Upper lobe of right lung (tissue), 1 donor: ENCODE measurements at regions of chr17 and their contacts with region 1.

Region 1: DNA sequence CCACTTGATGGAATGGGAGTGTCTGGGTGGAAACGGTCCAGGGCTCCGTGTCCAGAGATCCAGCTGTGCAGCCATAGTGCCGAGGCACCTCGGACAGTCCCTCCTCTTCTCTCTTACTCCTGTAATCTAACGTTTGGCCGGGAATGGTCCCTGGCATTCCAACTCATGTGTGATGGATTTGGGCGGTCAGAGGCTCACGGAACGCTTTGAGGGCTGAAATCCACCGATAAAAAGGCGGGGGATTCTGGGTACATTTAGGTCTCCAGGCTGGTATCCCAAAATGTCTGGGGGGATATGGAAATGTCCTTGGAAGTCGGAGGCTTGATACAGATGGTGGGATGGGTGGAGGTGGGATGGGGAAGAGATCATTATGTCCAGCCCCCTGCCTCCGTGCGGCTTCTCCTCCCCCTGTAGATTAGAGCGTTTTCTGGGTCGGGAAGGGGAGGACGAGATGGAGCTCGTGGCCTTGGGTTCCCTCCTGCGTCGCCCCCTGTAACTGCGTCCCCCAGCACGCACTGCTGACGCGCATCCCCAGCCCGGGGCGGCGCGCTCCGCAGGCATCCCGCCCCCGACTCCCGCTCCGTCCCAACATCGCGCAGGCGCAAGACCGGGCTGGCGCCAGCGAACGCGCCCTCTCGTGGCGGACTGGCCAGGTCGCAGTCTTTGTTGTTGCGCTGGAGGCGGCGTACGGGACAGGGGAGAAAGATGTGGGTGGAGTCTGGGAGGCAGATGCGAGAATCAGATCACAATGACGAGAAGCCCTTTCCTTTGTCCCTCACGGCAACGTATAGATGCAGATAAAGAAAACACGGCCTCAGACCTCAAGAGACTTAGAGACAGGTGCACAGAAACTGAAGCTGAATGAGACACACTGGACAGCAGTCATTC is 4.5 kb upstream of the SGCA start:
- DNase-seq: peak; percentile 95
- ATAC-seq: peak; percentile 98
- H3K4me3 ChIP-seq: peak overlapping the region; percentile 50
- H3K27ac ChIP-seq: no peak overlapping the region
- H3K4me1 ChIP-seq: peaks cover 11% of the 10 kb centered on the region
- H3K27me3 ChIP-seq: no peaks in the 10 kb centered on the region
- CTCF ChIP-seq: peak; percentile 94

Region 2: DNA sequence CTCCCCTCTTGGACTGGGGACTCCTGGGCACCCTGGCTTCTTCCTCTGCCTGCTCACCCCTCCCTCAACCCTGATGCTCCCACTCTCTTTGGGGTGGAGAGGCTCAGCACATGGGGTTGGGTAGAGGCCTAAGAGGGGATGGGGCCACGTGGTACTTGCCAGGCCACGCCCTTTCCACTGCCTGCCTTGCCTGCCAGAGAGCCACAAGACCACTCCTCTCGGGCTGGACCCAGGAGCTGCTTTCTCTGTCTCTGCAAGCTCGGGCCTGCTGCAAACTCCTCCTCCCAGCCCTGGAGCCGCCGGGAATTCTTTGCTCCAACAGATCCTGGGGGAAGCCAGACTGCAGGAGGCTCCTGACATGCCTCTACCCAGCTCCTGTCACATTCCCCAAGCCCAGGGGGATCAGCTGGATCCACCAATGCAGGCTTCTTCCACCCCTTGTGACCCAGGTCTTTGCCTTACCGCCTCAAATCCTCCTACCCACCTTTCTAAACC is 180.5 kb before region 1 on chr17:
- intact Hi-C with region 1: no loop called
- DNase-seq: no peak
- ATAC-seq: no peak
- H3K4me3 ChIP-seq: no peak overlapping the region
- H3K27ac ChIP-seq: no peak overlapping the region
- H3K4me1 ChIP-seq: no peaks in the 10 kb centered on the region
- H3K27me3 ChIP-seq: peaks cover 12% of the 10 kb centered on the region
- CTCF ChIP-seq: no peak

Region 3: DNA sequence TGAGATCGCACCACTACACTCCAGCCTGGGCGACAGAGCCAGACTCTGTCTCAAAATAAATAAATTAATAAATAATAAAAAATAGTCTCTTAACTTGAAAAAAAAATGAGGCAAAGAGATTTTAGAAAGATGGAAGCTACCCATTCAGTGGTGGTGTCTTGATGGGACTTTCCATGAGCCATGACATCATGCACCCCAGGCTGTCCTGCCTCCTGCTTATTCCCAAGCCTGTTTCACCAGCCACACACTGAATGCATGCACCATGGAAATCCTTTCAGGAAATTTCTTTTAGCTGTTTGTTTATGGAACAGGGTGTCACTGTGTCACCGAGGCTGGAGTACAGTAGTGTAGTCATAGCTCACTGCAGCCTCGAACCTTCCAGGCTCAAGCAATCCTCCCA is 157.4 kb before region 1 on chr17:
- intact Hi-C with region 1: no loop called
- DNase-seq: no peak
- ATAC-seq: no peak
- H3K4me3 ChIP-seq: no peak overlapping the region
- H3K27ac ChIP-seq: no peak overlapping the region
- H3K4me1 ChIP-seq: no peaks in the 10 kb centered on the region
- H3K27me3 ChIP-seq: peaks cover 39% of the 10 kb centered on the region
- CTCF ChIP-seq: no peak

Region 4: DNA sequence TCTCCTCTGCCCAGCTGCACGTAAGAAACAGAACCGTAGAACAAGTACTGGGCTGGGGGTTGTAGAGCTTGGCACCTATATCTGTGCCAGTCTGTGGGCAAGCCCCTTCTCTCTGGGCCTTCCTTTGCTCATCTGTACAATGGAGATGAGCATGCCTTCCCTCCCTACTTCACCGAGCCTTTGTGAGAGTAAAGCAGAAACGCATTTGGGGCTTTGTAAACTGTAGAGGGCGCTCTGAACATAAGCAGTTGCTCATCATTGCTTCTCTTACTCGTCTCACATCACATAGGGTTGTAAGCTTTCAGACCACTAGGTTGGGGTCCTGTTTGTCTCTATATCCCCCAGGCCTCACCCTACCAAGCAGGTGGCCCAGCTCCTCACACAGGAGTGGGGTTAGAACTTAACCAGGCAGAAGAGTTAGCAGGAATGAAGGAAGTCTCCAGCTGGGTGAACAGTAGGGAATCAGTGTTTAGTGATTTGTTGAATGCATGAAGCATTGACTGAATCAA is 46.4 kb before region 1 on chr17:
- intact Hi-C with region 1: loop called (anchors 10 kb)
- DNase-seq: no peak
- ATAC-seq: peak; percentile 27
- H3K4me3 ChIP-seq: no peak overlapping the region
- H3K27ac ChIP-seq: no peak overlapping the region
- H3K4me1 ChIP-seq: peaks cover 15% of the 10 kb centered on the region
- H3K27me3 ChIP-seq: peaks cover 27% of the 10 kb centered on the region
- CTCF ChIP-seq: peak; percentile 58